A549 (cell line): ENCODE measurements at regions of chr5 and their contacts with region 1.

Region 1: GRCh38 chr5:6280425-6281100 is 97.8 kb downstream of the MED10 start:
- DNase-seq: no peak
- ATAC-seq: no peak
- H3K4me3 ChIP-seq: no peak overlapping the region
- H3K27ac ChIP-seq: no peak overlapping the region
- H3K4me1 ChIP-seq: no peaks in the 10 kb centered on the region
- CTCF ChIP-seq: no peak
- EP300 ChIP-seq: no peak
- POLR2A ChIP-seq: no peak
- RAD21 ChIP-seq: no peak

Region 2: DNA sequence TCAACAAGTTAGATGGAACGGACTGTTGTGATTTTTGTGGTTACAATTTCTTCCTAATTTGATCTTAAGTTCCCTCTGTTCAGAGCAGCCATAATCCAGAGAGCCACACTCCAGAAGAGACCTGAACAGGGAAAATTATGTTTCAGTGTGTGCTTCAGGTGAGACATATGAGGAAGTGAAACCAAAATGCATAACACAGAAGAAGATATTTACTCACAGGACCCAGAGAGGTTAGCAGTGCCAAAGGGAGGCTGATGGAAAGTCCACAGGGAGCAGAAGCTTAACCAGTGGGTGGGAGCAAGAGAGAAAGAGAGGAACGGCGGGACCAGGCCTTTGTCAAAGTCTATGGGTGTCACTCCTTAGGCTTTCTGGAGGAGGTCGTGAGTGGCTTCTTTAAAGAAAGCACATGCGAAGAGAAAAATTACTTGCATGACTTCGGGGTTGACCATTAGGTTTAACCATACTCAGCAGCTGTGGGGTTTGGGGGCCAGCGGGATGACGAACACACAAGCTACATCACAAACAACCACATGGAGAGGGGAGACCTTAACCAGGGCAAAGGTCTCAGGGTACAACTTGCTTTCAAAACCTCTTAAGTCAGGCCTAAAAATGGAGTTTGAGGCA is 43.6 kb before region 1 on chr5:
- CTCF ChIA-PET with region 1: no interaction called
- POLR2A ChIA-PET with region 1: interaction called, 13 read pairs
- DNase-seq: no peak
- ATAC-seq: no peak
- H3K4me3 ChIP-seq: no peak overlapping the region
- H3K27ac ChIP-seq: no peak overlapping the region
- H3K4me1 ChIP-seq: no peaks in the 10 kb centered on the region
- CTCF ChIP-seq: no peak
- EP300 ChIP-seq: no peak
- POLR2A ChIP-seq: no peak
- RAD21 ChIP-seq: no peak

Region 3: DNA sequence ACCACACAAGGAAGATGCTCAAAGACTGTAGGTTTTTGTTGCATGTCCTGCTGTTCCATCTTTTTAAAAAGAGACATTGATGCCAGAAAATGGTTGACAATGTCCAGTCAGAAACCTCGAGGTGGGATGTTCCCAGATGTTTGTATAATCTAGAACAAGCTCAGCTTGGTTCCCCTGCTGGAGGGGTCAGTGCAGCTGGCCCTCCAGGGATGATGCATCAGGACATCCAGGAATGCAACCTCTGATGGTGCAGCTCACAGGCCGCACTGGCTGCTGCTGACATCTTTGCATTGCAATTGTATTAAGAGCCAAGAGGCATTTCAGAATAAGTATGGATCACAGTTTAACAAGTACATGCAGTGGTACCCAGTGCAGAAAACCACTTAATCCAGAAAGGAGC is 24.6 kb before region 1 on chr5:
- CTCF ChIA-PET with region 1: no interaction called
- POLR2A ChIA-PET with region 1: no interaction called
- DNase-seq: no peak
- ATAC-seq: no peak
- H3K4me3 ChIP-seq: no peak overlapping the region
- H3K27ac ChIP-seq: no peak overlapping the region
- H3K4me1 ChIP-seq: no peaks in the 10 kb centered on the region; the same call in 2 of the 3 replicates
- CTCF ChIP-seq: no peak
- EP300 ChIP-seq: no peak
- POLR2A ChIP-seq: no peak
- RAD21 ChIP-seq: no peak

Region 4: DNA sequence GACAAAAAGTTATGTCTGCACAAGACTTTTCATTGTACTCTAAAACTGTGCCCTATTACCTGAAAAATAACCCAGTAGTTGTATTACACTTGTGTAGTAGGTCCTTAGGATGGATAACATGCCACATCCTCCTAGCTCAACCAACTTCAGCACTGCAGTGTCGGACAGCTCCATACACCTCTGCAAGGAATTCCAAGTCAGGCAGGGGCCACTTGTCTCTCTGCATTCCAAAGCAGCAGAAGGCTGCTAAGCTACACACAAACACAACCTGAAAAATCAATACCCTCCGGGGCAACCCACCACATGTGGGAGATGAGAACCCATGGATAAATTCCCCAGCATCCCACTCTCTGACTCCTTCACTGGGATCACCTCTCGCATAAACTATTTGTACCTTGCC is 47.6 kb after region 1 on chr5:
- CTCF ChIA-PET with region 1: no interaction called
- POLR2A ChIA-PET with region 1: no interaction called
- DNase-seq: peak in 1 of 2 experiments; percentile 25
- ATAC-seq: no peak; a peak in 1 of 6 replicates
- H3K4me3 ChIP-seq: no peak overlapping the region
- H3K27ac ChIP-seq: no peak overlapping the region
- H3K4me1 ChIP-seq: no peaks in the 10 kb centered on the region
- CTCF ChIP-seq: no peak
- EP300 ChIP-seq: no peak
- POLR2A ChIP-seq: no peak
- RAD21 ChIP-seq: no peak

Region 5: GRCh38 chr5:6393596-6394194 is 113.1 kb after region 1 on chr5:
- CTCF ChIA-PET with region 1: no interaction called
- POLR2A ChIA-PET with region 1: no interaction called
- DNase-seq: no peak
- ATAC-seq: no peak
- H3K4me3 ChIP-seq: no peak overlapping the region
- H3K27ac ChIP-seq: no peak overlapping the region
- H3K4me1 ChIP-seq: no peaks in the 10 kb centered on the region
- CTCF ChIP-seq: no peak
- EP300 ChIP-seq: no peak
- POLR2A ChIP-seq: no peak
- RAD21 ChIP-seq: no peak

Region 6: GRCh38 chr5:6592601-6593000 is 312.0 kb after region 1 on chr5:
- CTCF ChIA-PET with region 1: no interaction called
- POLR2A ChIA-PET with region 1: no interaction called
- DNase-seq: no peak
- ATAC-seq: no peak
- H3K4me3 ChIP-seq: no peak overlapping the region
- H3K27ac ChIP-seq: no peak overlapping the region
- H3K4me1 ChIP-seq: no peaks in the 10 kb centered on the region
- CTCF ChIP-seq: no peak
- EP300 ChIP-seq: no peak
- POLR2A ChIP-seq: no peak
- RAD21 ChIP-seq: no peak